ENCODE measurements at regions of chr2 and their contacts with region 1.

Region 1: GRCh38 chr2:202588647-202589581 is 45.9 kb upstream of the FAM117B start:
- DNase-seq: peak; percentile 71 to 77 (median 72)
- H3K4me3 ChIP-seq: no peak overlapping the region
- H3K4me3 Mint-ChIP-seq: peak overlapping the region in 2 of 8 donors; percentile 43 to 50
- H3K27ac ChIP-seq: no peak overlapping the region
- H3K27ac Mint-ChIP-seq: peak overlapping the region in 1 of 7 donors; percentile 4
- H3K4me1 ChIP-seq: peaks cover 5% of the 10 kb centered on the region
- H3K4me1 Mint-ChIP-seq: peaks cover 4 to 8% (median 7%) of the 10 kb centered on the region in 4 donors
- H3K27me3 ChIP-seq: no peaks in the 10 kb centered on the region
- H3K27me3 Mint-ChIP-seq: peaks cover 0 to 2% of the 10 kb centered on the region in 2 donors

Region 2: DNA sequence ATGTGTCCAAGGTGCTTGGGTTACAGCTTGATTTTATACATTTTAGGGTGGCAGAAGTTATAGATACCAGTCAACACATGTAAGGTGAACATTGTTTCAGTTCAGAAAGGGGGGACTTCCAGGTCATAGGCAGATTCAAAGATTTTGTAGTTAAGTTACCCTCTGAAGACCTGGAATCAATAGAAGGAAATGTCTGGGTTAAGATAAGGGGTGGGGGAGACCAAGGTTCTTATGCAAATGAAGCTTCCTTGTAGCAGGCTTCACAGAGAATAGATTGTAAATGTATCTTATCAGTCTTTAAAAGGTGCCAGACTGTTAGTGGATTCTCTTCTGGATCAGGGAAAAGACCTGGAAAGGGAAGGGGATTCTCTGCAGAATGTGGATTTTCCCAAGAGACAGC is 170.4 kb before region 1 on chr2:
- CTCF ChIA-PET with region 1: no interaction called
- POLR2A ChIA-PET with region 1: no interaction called
- intact Hi-C with region 1: no loop called
- DNase-seq: no peak
- H3K4me3 ChIP-seq: no peak overlapping the region
- H3K4me3 Mint-ChIP-seq: no peak overlapping the region
- H3K27ac ChIP-seq: no peak overlapping the region
- H3K27ac Mint-ChIP-seq: no peak overlapping the region
- H3K4me1 ChIP-seq: no peaks in the 10 kb centered on the region
- H3K4me1 Mint-ChIP-seq: peaks cover 0 to 4% (median 3%) of the 10 kb centered on the region in 4 donors
- H3K27me3 ChIP-seq: no peaks in the 10 kb centered on the region
- H3K27me3 Mint-ChIP-seq: no peaks in the 10 kb centered on the region

Region 3: GRCh38 chr2:202602285-202602684 is 13.4 kb after region 1 on chr2:
- CTCF ChIA-PET with region 1: interaction called, 26 read pairs
- POLR2A ChIA-PET with region 1: interaction called, 3 read pairs
- intact Hi-C with region 1: no loop called
- DNase-seq: no peak
- H3K4me3 ChIP-seq: no peak overlapping the region
- H3K4me3 Mint-ChIP-seq: no peak overlapping the region
- H3K27ac ChIP-seq: no peak overlapping the region
- H3K27ac Mint-ChIP-seq: no peak overlapping the region
- H3K4me1 ChIP-seq: no peaks in the 10 kb centered on the region
- H3K4me1 Mint-ChIP-seq: no peaks in the 10 kb centered on the region
- H3K27me3 ChIP-seq: no peaks in the 10 kb centered on the region
- H3K27me3 Mint-ChIP-seq: no peaks in the 10 kb centered on the region

Region 4: GRCh38 chr2:202831242-202832220 is 242.6 kb after region 1 on chr2:
- CTCF ChIA-PET with region 1: interaction called, 4 read pairs
- POLR2A ChIA-PET with region 1: no interaction called
- intact Hi-C with region 1: loop called (anchors 1 kb)
- DNase-seq: peak; percentile 46 to 54 (median 48)
- H3K4me3 ChIP-seq: no peak overlapping the region
- H3K4me3 Mint-ChIP-seq: peak overlapping the region in 4 of 8 donors; percentile 30 to 71 (median 38)
- H3K27ac ChIP-seq: no peak overlapping the region
- H3K27ac Mint-ChIP-seq: peak overlapping the region in 5 of 7 donors; percentile 26 to 91 (median 42)
- H3K4me1 ChIP-seq: peaks cover 9% of the 10 kb centered on the region
- H3K4me1 Mint-ChIP-seq: peaks cover 9 to 11% (median 9%) of the 10 kb centered on the region in 4 donors
- H3K27me3 ChIP-seq: no peaks in the 10 kb centered on the region
- H3K27me3 Mint-ChIP-seq: no peaks in the 10 kb centered on the region

Region 5: DNA sequence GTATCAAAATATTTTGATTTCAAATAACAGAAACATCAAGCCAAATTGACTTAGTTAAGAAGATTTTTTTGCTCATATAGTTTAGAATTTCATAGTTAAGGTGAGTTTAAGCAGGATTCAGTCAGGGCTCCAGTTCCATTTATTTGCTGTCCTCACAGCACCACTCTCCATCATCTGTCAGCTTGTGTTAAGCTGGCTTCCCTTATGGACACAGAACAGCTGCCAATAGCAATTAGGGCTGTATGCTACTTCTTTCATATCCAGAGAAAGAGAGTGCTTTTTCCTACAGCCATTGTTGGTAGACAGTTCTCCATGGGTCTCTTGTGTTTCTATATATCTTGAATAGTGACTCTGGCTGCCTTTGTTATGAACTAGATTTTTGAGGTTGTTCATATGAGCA is 554.5 kb after region 1 on chr2:
- CTCF ChIA-PET with region 1: no interaction called
- POLR2A ChIA-PET with region 1: no interaction called
- intact Hi-C with region 1: no loop called
- DNase-seq: no peak
- H3K4me3 ChIP-seq: no peak overlapping the region
- H3K4me3 Mint-ChIP-seq: no peak overlapping the region
- H3K27ac ChIP-seq: no peak overlapping the region
- H3K27ac Mint-ChIP-seq: no peak overlapping the region
- H3K4me1 ChIP-seq: no peaks in the 10 kb centered on the region
- H3K4me1 Mint-ChIP-seq: no peaks in the 10 kb centered on the region
- H3K27me3 ChIP-seq: no peaks in the 10 kb centered on the region
- H3K27me3 Mint-ChIP-seq: no peaks in the 10 kb centered on the region

Region 6: GRCh38 chr2:203155406-203155805 is 566.5 kb after region 1 on chr2:
- CTCF ChIA-PET with region 1: interaction called, 12 read pairs
- POLR2A ChIA-PET with region 1: no interaction called
- intact Hi-C with region 1: no loop called
- DNase-seq: peak in 4 of 5 donors; percentile 10 to 20 (median 17)
- H3K4me3 ChIP-seq: no peak overlapping the region
- H3K4me3 Mint-ChIP-seq: peak overlapping the region in 1 of 8 donors; percentile 14
- H3K27ac ChIP-seq: no peak overlapping the region
- H3K27ac Mint-ChIP-seq: peak overlapping the region in 6 of 7 donors; percentile 20 to 75 (median 40)
- H3K4me1 ChIP-seq: peaks cover 9% of the 10 kb centered on the region
- H3K4me1 Mint-ChIP-seq: peaks cover 7 to 12% (median 10%) of the 10 kb centered on the region in 4 donors
- H3K27me3 ChIP-seq: no peaks in the 10 kb centered on the region
- H3K27me3 Mint-ChIP-seq: no peaks in the 10 kb centered on the region